Activated CD4-positive, alpha-beta T cell treated with anti-CD3 and anti-CD28 coated beads for 36 hours (primary cell): ENCODE measurements at regions of chr17 and their contacts with region 1.

Region 1: GRCh38 chr17:80008383-80008840 is 27.3 kb downstream of the TBC1D16 start:
- DNase-seq: peak; percentile 91
- ATAC-seq: peak; percentile 95
- H3K4me3 Mint-ChIP-seq: no peak overlapping the region
- H3K27ac Mint-ChIP-seq: no peak overlapping the region
- H3K4me1 Mint-ChIP-seq: peaks cover 9% of the 10 kb centered on the region
- H3K27me3 Mint-ChIP-seq: no peaks in the 10 kb centered on the region

Region 2: GRCh38 chr17:79997011-79997660 is 11.3 kb before region 1 on chr17:
- CTCF ChIA-PET with region 1: interaction called, 35 read pairs
- POLR2A ChIA-PET with region 1: no interaction called
- intact Hi-C with region 1: no loop called
- DNase-seq: peak; percentile 88
- ATAC-seq: peak; percentile 88
- H3K4me3 Mint-ChIP-seq: peak overlapping the region; percentile 60
- H3K27ac Mint-ChIP-seq: peak overlapping the region; percentile 98
- H3K4me1 Mint-ChIP-seq: peaks cover 53% of the 10 kb centered on the region
- H3K27me3 Mint-ChIP-seq: no peaks in the 10 kb centered on the region

Region 3: DNA sequence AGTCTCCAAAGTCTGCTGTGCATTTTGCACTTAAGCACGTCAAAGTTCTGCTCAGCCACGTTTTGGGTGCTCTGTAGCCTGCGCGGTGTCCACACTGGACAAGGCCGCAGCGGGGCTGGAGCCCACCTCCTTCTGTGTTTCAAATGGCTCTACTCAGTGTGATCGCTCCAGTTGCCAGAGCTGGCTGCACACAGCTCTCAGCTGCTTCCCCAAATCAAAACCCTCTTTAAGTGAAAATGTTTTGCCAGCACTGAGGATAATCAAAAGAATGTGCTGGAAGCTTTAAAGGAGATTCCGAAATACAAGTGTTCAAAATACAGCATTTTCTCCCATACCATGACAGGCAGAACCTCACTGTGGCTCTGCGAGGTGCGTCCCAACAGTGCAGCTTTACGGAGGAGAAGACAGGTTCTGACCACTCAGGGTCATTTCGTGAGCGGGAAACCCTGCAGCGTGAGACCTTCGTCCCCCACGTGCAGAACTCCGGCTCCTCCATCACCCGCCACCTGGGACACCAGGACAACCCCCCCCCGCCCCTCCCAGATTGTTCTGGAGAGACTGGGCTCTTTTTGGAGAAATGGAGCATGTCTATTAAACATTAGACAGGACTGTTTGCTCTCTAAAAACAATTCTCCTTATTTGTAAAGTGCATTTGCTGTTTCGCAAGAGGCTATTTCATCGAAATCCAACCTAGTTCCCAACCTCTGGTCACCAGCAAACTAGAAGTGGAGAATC is 10.7 kb after region 1 on chr17:
- CTCF ChIA-PET with region 1: interaction called, 17 read pairs
- POLR2A ChIA-PET with region 1: no interaction called
- intact Hi-C with region 1: no loop called
- DNase-seq: no peak
- ATAC-seq: no peak
- H3K4me3 Mint-ChIP-seq: no peak overlapping the region
- H3K27ac Mint-ChIP-seq: no peak overlapping the region
- H3K4me1 Mint-ChIP-seq: no peaks in the 10 kb centered on the region
- H3K27me3 Mint-ChIP-seq: no peaks in the 10 kb centered on the region

Region 4: GRCh38 chr17:80035943-80036714 is 27.7 kb after region 1 on chr17 and contains the start of gene CCDC40:
- CTCF ChIA-PET with region 1: interaction called, 22 read pairs
- POLR2A ChIA-PET with region 1: no interaction called
- intact Hi-C with region 1: loop called in 1 of 2 experiments (anchors 1 kb)
- DNase-seq: peak; percentile 82
- ATAC-seq: peak; percentile 72
- H3K4me3 Mint-ChIP-seq: peak within 1 kb of the TSS; percentile 82
- H3K27ac Mint-ChIP-seq: no peak within 1 kb of the TSS
- H3K4me1 Mint-ChIP-seq: peaks cover 7% of the 10 kb centered on the region
- H3K27me3 Mint-ChIP-seq: peaks cover 12% of the 10 kb centered on the region
- total RNA-seq, gene CCDC40: 0.56 to 0.57 TPM

Region 5: GRCh38 chr17:80082403-80083135 is 74.2 kb after region 1 on chr17:
- CTCF ChIA-PET with region 1: interaction called, 4 read pairs
- POLR2A ChIA-PET with region 1: no interaction called
- intact Hi-C with region 1: loop called in 1 of 2 experiments (anchors 5 kb)
- DNase-seq: peak; percentile 80
- ATAC-seq: peak; percentile 91
- H3K4me3 Mint-ChIP-seq: no peak overlapping the region
- H3K27ac Mint-ChIP-seq: no peak overlapping the region
- H3K4me1 Mint-ChIP-seq: peaks cover 3% of the 10 kb centered on the region
- H3K27me3 Mint-ChIP-seq: no peaks in the 10 kb centered on the region

Region 6: DNA sequence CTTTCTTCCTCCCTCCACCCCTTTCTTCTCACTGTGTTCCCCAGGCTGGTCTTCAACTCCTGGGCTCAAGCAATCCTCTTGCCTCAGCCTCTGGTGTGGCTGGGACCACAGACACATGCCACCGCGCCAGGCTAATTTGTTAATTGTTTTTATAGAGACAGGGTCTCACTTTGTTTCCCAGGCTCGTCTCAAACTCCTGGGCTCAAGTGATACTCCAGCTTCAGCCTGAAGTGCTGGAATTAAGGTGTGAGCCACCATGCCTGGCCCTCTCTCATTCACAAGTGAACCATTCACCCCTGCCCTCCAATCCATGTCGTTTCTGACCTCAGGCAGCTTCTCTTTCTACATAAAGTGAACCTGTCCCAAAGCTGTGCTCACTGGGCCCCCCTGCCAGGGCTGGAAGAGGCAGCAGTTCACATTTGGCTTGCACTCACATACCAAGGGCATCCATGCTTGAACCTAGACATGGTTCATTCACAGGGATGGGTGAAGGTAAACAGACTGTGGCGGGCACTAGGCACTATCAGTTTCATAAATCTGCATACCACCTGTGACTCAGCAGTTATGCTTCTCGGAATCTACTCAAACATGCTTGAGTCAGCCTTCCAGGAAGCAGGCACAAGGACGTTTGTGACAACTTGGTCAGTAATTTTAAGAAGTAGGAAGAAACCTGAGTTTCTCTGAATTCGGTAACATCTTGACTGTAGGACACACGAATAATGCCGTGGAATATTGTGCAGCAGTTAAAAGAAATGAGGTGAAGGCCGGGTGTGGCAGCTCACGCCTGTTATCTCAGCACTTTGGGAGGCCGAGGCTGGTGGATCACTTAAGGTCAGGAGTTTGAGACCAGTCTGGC is 246.2 kb after region 1 on chr17:
- CTCF ChIA-PET with region 1: no interaction called
- POLR2A ChIA-PET with region 1: no interaction called
- intact Hi-C with region 1: loop called in 1 of 2 experiments (anchors 5 kb)
- DNase-seq: peak; percentile 83
- ATAC-seq: peak; percentile 62
- H3K4me3 Mint-ChIP-seq: peak overlapping the region; percentile 64
- H3K27ac Mint-ChIP-seq: peak overlapping the region; percentile 97
- H3K4me1 Mint-ChIP-seq: peaks cover 71% of the 10 kb centered on the region
- H3K27me3 Mint-ChIP-seq: no peaks in the 10 kb centered on the region